Endothelial cell of umbilical vein (primary cell): ENCODE measurements at regions of chr12 and their contacts with region 1.

Region 1: DNA sequence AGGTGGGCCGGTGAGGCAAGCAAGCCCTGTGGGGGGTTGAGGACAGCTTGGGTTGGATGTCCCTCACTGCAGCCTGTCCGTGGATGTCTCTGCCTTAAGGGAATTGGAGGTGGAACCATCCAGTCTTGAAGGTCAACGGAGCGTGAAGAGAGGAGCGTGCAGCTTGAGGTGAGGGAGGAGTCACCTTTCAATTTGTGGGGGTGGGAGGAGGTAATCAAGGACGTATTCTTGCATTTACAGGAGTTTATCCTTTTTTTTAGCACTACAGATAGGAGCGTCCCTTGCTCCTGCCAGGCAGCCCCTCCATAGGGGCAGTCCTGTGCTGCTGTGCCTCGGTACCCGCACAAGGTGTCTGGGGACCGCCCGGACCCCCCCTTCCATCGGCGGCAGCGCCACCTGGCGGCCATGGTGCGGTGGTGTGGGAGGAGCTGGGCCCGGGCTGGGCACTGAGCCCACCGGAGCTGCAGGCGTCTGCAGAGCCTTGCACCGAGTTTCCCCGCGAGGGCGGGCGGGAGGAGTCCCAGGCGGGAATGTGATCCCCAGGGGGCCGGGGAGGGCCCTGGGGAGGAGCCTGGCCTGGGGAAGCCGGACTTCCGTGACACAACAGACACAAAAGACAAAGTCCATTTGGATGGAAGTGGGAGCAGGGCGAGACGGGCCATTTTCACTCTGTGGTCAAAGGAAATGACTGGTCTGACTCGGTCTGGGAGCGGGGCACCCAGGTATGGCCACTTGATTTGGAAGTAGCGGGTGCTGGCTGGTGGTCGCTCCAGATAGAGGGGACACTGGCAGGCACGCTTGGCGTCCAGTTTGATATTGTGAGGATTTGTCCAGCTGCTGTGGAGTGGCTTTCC is 923 bp downstream of the DNAJC22 start:
- DNase-seq: peak; percentile 69
- H3K4me3 ChIP-seq: peak overlapping the region in 1 of 3 experiments; percentile 1
- H3K27ac ChIP-seq: no peak overlapping the region
- H3K4me1 ChIP-seq: peaks cover 37% of the 10 kb centered on the region
- H3K27me3 ChIP-seq: peaks cover 27 to 38% of the 10 kb centered on the region in 2 experiments
- CTCF ChIP-seq: peak; percentile 95 to 98
- POLR2A ChIP-seq: no peak

Region 2: DNA sequence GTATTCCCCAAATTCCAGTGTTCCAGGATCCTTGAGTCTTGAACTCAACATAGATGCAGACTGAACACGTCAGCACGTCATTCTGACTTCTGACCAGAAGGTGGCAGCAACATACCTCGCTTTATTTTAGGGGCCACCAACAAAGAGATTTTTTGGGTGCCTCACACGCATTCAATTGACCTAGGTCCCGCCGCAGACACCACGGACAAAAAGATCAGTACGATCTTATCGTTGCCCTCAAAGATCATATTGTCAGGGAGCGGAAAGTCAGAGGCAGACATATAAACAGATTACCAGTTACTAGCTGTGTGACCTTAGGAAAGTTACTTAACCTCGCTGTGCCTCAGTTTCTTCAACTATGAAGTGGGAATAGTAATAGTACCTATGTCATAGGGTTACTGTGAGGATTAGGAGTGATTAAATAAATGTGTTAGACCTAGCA is 59.2 kb before region 1 on chr12:
- CTCF ChIA-PET with region 1: interaction called, 162 read pairs
- POLR2A ChIA-PET with region 1: interaction called, 3 read pairs
- dilution Hi-C with region 1: no loop called
- intact Hi-C with region 1: loop called (anchors 1 kb)
- DNase-seq: peak; percentile 57
- H3K4me3 ChIP-seq: no peak overlapping the region
- H3K27ac ChIP-seq: no peak overlapping the region
- H3K4me1 ChIP-seq: peaks cover 2% of the 10 kb centered on the region
- H3K27me3 ChIP-seq: peaks cover 4 to 9% of the 10 kb centered on the region in 2 experiments
- CTCF ChIP-seq: peak; percentile 75 to 80
- POLR2A ChIP-seq: no peak

Region 3: GRCh38 chr12:49322708-49323523 is 24.7 kb before region 1 on chr12 and contains the start of gene TROAP:
- CTCF ChIA-PET with region 1: interaction called, 43 read pairs
- POLR2A ChIA-PET with region 1: interaction called, 7 read pairs
- dilution Hi-C with region 1: no loop called
- intact Hi-C with region 1: loop called (anchors 1 kb)
- DNase-seq: peak; percentile 99
- H3K4me3 ChIP-seq: peak within 1 kb of the TSS; percentile 59 to 90 (median 73)
- H3K27ac ChIP-seq: peak within 1 kb of the TSS; percentile 58
- H3K4me1 ChIP-seq: peaks cover 12% of the 10 kb centered on the region
- H3K27me3 ChIP-seq: no peaks in the 10 kb centered on the region
- CTCF ChIP-seq: no peak
- POLR2A ChIP-seq: peak; percentile 52
- total RNA-seq, gene TROAP: 62.4 and 68.6 TPM in 2 replicates

Region 4: GRCh38 chr12:49336645-49337584 is 10.7 kb before region 1 on chr12 and contains the start of gene C1QL4:
- CTCF ChIA-PET with region 1: interaction called, 280 read pairs
- POLR2A ChIA-PET with region 1: interaction called, 3 read pairs
- dilution Hi-C with region 1: no loop called
- intact Hi-C with region 1: no loop called
- DNase-seq: peak; percentile 69
- H3K4me3 ChIP-seq: peak within 1 kb of the TSS in 1 of 3 experiments; percentile 20
- H3K27ac ChIP-seq: no peak within 1 kb of the TSS
- H3K4me1 ChIP-seq: no peaks in the 10 kb centered on the region
- H3K27me3 ChIP-seq: peaks cover 59 to 70% of the 10 kb centered on the region in 2 experiments
- CTCF ChIP-seq: peak; percentile 64 to 97
- POLR2A ChIP-seq: no peak
- total RNA-seq, gene C1QL4: not detected in 2 replicates

Region 5: GRCh38 chr12:49503674-49504180 is 156.1 kb after region 1 on chr12:
- CTCF ChIA-PET with region 1: interaction called, 21 read pairs
- POLR2A ChIA-PET with region 1: no interaction called
- dilution Hi-C with region 1: loop called (anchors 25 kb)
- intact Hi-C with region 1: no loop called
- DNase-seq: peak; percentile 94
- H3K4me3 ChIP-seq: peak overlapping the region in 1 of 3 experiments; percentile 21
- H3K27ac ChIP-seq: peak overlapping the region; percentile 86
- H3K4me1 ChIP-seq: peaks cover 68% of the 10 kb centered on the region
- H3K27me3 ChIP-seq: no peaks in the 10 kb centered on the region
- CTCF ChIP-seq: no peak
- POLR2A ChIP-seq: no peak

Region 6: DNA sequence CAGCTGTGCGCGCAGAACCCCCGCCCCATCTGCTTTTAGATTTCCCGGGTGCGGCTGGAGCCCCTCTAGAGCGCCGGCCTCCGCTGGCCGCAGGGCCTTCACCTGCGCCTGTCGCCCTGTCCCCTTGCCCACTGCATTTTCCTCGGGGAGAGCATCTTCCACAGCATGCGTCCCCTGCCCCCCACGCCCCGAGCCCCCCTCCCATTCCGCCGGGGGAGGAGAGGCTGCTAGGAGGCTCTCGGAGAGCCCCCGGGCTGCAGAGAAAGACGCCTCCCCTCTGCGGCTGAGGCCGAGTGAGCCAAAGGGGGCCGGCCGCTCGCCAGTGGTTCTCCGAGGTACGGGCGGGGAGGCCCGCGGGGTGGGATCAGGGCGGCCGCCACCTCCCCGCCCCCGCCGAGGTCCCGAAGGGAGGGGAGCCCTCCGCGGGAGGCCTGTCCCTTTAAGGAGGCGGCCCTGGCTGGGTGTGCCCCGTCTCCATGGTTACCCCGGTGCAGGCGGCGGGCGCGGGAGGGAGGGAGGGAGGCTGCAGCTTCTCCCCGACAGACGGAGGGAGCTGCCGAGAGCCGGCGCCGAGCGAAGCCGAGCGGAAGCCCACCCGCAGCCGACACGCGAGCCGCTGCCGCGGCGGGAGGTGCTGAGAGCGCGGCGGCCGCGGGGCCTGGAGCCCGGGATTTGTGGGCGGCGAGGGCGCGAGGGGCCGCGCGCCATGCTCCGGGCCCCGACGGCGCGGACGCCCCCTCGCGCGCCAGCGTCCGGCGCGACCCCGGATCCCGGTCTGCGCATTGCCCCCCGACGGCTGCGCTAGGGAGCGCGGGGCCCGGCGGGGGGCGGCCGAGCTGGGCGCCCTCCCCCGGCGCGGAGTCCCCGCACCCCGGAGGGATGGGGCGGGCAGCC is 191.1 kb after region 1 on chr12 and contains the start of gene KCNH3:
- CTCF ChIA-PET with region 1: interaction called, 18 read pairs
- POLR2A ChIA-PET with region 1: no interaction called
- dilution Hi-C with region 1: no loop called
- intact Hi-C with region 1: no loop called
- DNase-seq: peak; percentile 29
- H3K4me3 ChIP-seq: peak within 1 kb of the TSS in 1 of 3 experiments; percentile 17
- H3K27ac ChIP-seq: no peak within 1 kb of the TSS
- H3K4me1 ChIP-seq: peaks cover 8% of the 10 kb centered on the region
- H3K27me3 ChIP-seq: peaks cover 20 to 35% of the 10 kb centered on the region in 2 experiments
- CTCF ChIP-seq: no peak
- POLR2A ChIP-seq: no peak
- total RNA-seq, gene KCNH3: 0.13 and 0.18 TPM in 2 replicates

Region 7: GRCh38 chr12:49580572-49581535 is 233.2 kb after region 1 on chr12:
- CTCF ChIA-PET with region 1: interaction called, 17 read pairs
- POLR2A ChIA-PET with region 1: no interaction called
- dilution Hi-C with region 1: no loop called
- intact Hi-C with region 1: no loop called
- DNase-seq: peak; percentile 65
- H3K4me3 ChIP-seq: no peak overlapping the region
- H3K27ac ChIP-seq: no peak overlapping the region
- H3K4me1 ChIP-seq: no peaks in the 10 kb centered on the region
- H3K27me3 ChIP-seq: no peaks in the 10 kb centered on the region
- CTCF ChIP-seq: peak; percentile 89 to 90
- POLR2A ChIP-seq: no peak